Heart right ventricle (tissue), 16 donors: ENCODE measurements at regions of chr12 and their contacts with region 1.

Region 1: DNA sequence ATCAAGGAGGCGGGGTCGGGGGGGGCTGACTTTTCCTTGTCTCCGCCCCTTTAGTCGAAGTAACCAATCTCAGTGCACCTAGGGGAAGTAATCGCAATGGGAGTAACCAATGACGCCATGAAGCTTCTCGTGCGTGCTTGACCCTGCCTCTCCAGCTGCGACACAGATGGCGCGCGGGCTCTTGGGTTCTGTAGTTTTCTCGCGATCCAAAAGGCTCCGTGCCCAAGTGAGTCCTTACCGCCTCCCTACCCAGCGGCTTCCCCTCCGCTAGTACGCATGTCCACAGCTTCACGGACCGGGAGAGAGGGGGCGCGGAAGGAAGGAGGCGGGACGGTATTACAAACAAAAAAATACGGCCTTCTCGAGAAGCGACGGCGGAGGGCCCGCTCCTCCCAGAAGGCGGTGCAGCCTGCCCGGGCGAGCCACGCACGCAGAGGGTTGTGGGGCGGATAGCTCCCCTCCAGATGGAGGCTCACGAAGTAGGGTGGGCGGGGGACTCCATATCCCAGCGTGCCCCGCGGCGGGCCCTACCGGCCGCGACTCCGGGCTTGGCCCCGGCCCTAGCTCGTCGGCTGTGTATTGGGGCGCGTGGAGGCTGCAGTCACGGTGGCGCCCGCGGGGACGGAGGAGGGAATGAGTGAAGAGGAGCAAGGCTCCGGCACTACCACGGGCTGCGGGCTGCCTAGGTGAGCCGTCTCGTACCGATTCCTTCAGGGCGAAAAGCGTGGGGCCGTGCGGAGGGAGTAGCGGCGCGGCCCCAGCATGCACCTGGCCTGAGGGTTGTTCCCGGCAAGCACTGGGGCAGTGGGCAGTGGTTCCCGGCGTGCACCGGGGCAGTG is at the start of gene TARBP2:
- DNase-seq: peak; percentile 96 to 99
- ATAC-seq: peak; percentile 87 to 93 (median 89)
- H3K4me3 ChIP-seq: peak within 1 kb of the TSS; percentile 44 to 87 (median 74)
- H3K27ac ChIP-seq: peak within 1 kb of the TSS; percentile 96 to 99 (median 97)
- H3K4me1 ChIP-seq: peaks cover 15 to 55% (median 33%) of the 10 kb centered on the region in 9 donors
- H3K27me3 ChIP-seq: no peaks in the 10 kb centered on the region
- CTCF ChIP-seq: peak in 3 of 9 donors; percentile 17 to 26 (median 21)
- total RNA-seq, gene TARBP2: 7.0 to 13.7 (median 11.0) TPM

Region 2: GRCh38 chr12:53123578-53124351 is 377.2 kb before region 1 on chr12:
- intact Hi-C with region 1: no loop called
- DNase-seq: no peak
- ATAC-seq: peak in 2 of 8 donors; percentile 19 to 27
- H3K4me3 ChIP-seq: no peak overlapping the region
- H3K27ac ChIP-seq: no peak overlapping the region
- H3K4me1 ChIP-seq: no peaks in the 10 kb centered on the region
- H3K27me3 ChIP-seq: no peaks in the 10 kb centered on the region
- CTCF ChIP-seq: no peak

Region 3: DNA sequence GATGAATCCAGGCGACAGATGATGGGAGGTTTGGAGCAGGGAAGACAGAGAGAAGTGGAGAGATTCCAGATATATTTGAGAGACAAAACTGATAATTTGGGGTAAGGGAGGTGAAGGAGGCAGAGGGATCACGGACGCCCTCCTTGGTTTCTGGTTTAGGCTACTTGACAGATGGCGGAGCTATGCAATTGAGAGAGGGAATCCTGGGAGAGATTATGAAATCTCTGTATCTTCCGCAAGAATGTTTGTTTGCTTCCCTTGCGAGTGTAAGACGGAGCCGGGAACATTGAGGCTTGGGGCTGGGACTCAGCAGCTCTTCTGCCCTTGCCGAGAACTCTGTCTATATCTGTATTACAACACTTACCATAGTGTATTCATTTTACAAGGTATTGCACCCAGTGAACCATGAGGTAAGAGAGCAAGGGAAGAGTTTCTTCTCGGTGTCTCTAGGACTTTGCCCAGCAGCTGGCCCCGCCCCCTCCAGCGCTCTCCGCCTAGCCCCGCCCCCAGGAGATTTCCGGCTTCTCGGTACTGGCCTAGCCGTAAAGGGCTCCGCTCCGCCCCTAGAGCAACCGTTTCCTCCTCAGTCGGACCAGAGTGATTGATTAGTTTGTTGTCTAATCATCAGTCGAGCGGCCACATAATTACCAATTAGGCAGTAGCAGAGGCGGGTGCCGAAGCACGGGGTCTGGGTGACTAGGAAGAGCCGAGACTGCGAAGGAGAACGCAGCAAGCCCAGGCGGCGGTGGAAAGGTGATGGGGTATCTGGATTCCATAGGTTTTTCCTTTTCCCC is 59.8 kb before region 1 on chr12 and contains the start of gene PRR13:
- intact Hi-C with region 1: loop called in 1 of 10 experiments (anchors 10 kb)
- DNase-seq: peak; percentile 98 to 100
- ATAC-seq: peak; percentile 98 to 100 (median 99)
- H3K4me3 ChIP-seq: peak within 1 kb of the TSS; percentile 48 to 91 (median 74)
- H3K27ac ChIP-seq: peak within 1 kb of the TSS; percentile 42 to 94 (median 88)
- H3K4me1 ChIP-seq: peaks cover 7 to 45% (median 18%) of the 10 kb centered on the region in 9 donors
- H3K27me3 ChIP-seq: no peaks in the 10 kb centered on the region
- CTCF ChIP-seq: peak in 1 of 9 donors; percentile 3
- total RNA-seq, gene PRR13: 28.6 to 70.0 (median 55.4) TPM